GM10248 (cell line): ENCODE measurements at regions of chr1 and their contacts with region 1.

Region 1: DNA sequence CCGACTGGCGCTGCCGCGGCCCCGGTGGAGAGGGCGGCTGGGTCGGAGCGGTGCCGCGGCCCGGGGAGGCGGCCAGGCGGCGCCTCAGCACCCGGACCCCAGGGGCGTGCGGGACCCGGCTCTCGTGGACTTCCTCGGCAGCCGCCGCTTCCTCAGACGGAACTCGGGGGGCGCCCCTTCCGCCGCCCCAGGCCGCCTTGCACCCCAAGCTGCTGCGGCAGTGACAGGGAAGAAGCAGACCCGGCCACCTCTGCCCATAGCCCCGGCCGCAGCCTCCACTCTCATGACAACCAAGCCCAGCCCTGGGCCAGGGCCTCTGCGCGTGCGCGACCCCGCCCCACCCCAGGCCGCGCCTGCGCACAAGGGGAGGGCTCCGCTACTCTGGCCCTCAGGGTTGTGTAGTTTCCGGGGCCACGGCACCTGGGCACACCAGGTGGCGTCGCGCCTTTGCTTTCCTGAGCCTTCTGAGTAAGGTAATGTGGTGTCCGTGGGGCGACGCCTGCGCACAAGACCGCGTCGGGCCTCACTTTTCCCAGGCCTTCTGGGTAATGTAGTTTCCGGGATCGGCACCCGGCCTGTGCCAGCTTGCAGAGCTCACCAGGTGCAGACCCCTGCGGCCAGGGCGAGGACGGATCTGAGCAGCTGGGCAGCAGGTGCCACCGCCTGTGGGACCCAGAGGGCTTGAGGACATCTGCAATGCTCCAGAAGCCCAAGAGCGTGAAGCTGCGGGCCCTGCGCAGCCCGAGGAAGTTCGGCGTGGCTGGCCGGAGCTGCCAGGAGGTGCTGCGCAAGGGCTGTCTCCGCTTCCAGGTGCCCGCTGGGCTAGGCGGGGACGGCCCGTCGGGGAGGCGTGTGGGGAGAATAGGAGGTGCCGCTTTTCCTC is at the starts of genes CEP104 and DFFB:
- DNase-seq: peak; percentile 100
- CTCF ChIP-seq: peak; percentile 67

Region 2: GRCh38 chr1:3900119-3900968 is 43.2 kb after region 1 on chr1 and contains the start of gene C1orf174:
- CTCF ChIA-PET with region 1: interaction called, 13 read pairs
- POLR2A ChIA-PET with region 1: no interaction called
- DNase-seq: peak; percentile 92
- CTCF ChIP-seq: no peak

Region 3: GRCh38 chr1:4430406-4431365 is 573.5 kb after region 1 on chr1:
- CTCF ChIA-PET with region 1: no interaction called
- POLR2A ChIA-PET with region 1: no interaction called
- DNase-seq: no peak
- CTCF ChIP-seq: no peak